ENCODE measurements at regions of chr18 and their contacts with region 1.

Region 1: DNA sequence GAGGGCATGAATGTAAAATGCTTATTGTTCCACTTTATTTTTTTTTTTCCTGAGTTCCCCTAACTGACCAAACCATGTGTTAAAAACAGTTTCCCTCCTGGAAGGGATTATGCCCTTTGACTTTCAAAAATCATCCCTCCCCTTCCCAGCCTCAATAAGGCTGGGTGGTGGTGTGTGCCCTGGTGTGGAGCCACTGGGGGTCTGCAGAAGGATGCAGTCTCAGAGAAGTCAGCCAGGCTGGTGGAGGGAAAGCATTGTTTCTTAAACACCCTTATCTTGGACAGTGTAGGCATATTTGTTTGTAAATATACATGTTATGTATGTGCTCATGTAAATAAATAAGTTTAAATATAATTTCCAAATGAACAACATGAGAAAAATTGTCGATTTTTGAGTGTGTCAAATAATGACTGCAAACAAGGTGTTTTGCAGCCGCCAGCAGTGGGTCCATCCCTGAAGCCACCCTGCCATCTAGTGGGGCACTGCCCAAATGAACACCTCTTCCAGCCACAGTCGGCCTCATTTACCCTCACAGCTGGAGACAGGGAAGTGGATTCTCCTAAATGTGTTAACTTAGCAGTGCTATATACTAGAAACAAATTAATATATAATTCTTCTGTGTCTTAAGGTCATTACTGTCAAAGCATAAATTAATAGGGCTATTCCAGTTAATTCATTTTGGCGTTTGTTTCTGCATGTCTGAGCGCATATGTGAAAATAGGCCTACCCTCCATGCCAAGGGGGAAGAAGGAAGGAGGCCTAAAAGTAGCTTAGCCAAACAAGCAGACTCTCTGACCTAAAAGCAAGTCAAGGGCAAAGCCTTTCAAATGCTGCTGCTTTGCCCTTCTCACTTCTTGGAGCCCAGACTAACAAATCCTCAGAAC is 209.6 kb upstream of the PIK3C3 start:
- ATAC-seq: peak; percentile 86 to 97 (median 94)
- H3K4me3 ChIP-seq: no peak overlapping the region
- H3K27ac ChIP-seq: no peak overlapping the region
- H3K4me1 ChIP-seq: peaks cover 15 to 21% of the 10 kb centered on the region in 2 donors

Region 2: DNA sequence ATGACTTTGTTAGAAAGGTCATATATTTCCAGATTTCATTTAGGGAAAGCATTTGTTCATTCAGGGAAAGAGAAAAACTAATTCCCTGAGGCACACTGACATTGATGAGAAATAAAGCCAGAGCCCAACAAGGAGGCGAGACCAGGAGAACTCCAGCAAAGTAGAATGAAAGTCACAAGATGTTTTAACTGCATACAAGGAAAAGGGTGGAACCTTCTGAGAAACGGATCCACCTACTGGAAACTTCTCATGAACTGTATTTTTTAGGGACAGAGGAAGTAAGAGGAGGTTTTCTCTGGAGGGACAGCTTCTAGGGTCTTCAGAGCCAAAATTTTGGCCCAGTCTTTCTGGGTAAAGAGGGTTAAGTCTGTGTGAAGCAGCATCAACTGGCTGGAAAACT is 338.6 kb before region 1 on chr18:
- in situ Hi-C with region 1: loop called in 1 of 9 experiments (anchors 10 kb)
- ATAC-seq: peak in 2 of 8 experiments; percentile 93
- H3K4me3 ChIP-seq: no peak overlapping the region
- H3K27ac ChIP-seq: no peak overlapping the region
- H3K4me1 ChIP-seq: no peaks in the 10 kb centered on the region

Region 3: DNA sequence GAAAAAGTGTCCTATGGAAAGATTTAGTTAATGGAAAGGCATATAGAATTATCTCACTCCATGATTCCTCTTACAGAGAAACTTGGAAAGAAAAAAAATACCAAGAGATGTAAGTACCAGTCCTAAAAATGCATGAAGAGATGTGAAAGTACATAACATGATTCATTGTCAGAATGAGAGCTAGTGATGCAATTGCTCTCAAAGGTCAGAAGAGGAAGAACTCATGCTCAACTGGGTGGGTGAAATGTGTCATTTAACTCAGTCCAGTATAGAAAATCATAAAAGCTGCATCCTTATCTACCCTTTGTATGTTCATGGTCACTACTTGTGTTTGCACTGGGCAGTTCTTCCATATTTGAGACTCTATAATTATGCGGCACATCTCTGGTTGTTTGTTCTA is 90.3 kb before region 1 on chr18:
- in situ Hi-C with region 1: no loop called
- ATAC-seq: peak in 1 of 8 experiments; percentile 35
- H3K4me3 ChIP-seq: no peak overlapping the region
- H3K27ac ChIP-seq: no peak overlapping the region
- H3K4me1 ChIP-seq: peaks cover 17 to 23% of the 10 kb centered on the region in 2 donors

Region 4: GRCh38 chr18:42341423-42341822 is 596.0 kb after region 1 on chr18:
- in situ Hi-C with region 1: no loop called
- ATAC-seq: no peak
- H3K4me3 ChIP-seq: no peak overlapping the region
- H3K27ac ChIP-seq: no peak overlapping the region
- H3K4me1 ChIP-seq: peaks cover 12 to 14% of the 10 kb centered on the region in 2 donors

Region 5: DNA sequence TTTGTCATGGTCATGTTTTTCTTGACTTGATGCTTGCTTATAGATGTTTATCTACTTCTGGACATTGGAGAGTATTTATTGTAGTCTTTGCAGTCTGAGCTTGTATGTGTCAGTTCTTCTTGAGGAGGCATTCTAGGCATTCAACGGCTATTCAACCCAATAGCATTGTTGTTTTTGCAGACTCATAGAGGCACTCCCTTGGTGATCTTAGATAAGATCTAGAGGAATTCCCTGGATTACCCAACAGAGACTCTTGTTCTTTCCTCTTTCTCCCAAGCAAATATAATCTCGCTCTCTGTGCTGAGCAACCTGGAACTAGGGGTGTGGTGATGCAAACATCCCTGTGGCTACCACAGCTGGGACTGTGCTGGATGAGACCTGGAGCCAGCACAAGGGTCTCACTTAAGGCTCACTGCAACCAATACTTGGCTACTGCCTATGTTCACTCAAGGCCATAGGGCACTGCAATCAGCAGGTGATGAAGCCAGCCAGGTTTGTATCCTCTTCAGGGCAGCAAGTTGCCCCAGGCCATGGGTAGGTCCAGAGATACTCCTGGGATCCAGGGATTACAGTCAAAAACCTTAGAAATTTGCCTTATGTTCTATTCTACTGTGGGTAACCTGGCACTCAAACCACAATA is 1491.6 kb after region 1 on chr18:
- in situ Hi-C with region 1: no loop called
- ATAC-seq: no peak
- H3K4me3 ChIP-seq: no peak overlapping the region
- H3K27ac ChIP-seq: no peak overlapping the region
- H3K4me1 ChIP-seq: no peaks in the 10 kb centered on the region